AG04450 (cell line): ENCODE measurements at regions of chr10 and their contacts with region 1.

Region 1: GRCh38 chr10:96513698-96514561 is at the start of gene TLL2:
- DNase-seq: peak; percentile 66
- H3K4me3 ChIP-seq: peak within 1 kb of the TSS; percentile 61
- H3K27ac ChIP-seq: no peak within 1 kb of the TSS
- H3K27me3 ChIP-seq: peaks cover 18% of the 10 kb centered on the region
- CTCF ChIP-seq: peak; percentile 52
- polyA plus RNA-seq, gene TLL2: 0.01 TPM in 1 of 2 replicates, not detected in the other

Region 2: DNA sequence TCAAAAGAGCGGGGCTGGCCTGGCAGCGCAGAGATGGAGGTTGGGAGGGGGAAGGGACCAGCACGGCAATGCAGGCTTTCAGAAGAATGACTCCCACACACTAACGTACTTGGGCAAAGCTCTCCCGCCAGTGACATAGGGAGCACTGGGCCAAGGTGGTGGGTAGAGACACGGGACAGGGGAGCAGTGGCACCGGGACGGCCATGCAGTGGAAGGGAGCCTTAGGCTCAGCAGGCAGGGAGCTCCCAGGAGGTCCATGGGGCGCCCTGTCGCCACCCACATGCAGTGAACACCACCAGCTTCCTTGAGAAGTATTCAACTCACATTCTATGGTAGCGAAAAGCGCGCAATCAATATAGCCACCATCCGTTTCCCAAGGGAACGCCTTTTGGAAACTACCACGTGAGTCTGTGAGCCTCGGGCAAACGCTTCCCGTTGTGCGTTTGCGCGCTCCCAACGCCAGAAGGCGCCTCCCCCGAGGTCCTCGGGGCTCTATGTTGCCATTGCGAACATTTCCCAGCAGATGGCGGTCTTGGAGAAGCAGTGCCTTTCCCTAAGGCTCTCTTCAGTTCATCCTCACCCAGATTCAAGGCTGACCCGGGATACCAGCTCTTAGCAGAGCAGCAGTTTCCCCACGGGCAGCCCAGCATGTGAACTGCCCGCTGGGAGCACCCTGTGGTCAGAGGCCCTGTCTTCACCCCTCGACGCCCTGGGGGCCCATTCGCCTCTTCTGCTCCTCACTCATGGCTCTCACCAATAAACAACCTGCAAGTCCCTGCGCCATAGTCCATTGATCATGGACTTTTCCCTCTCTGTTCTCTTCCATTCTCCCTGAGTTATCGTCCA is 138.7 kb before region 1 on chr10:
- CTCF ChIA-PET with region 1: interaction called, 17 read pairs
- POLR2A ChIA-PET with region 1: no interaction called
- DNase-seq: peak; percentile 46
- H3K4me3 ChIP-seq: peak overlapping the region; percentile 53
- H3K27ac ChIP-seq: no peak overlapping the region
- H3K27me3 ChIP-seq: peaks cover 12% of the 10 kb centered on the region
- CTCF ChIP-seq: peak; percentile 95

Region 3: GRCh38 chr10:96395931-96396877 is 117.7 kb before region 1 on chr10:
- CTCF ChIA-PET with region 1: interaction called, 24 read pairs
- POLR2A ChIA-PET with region 1: no interaction called
- DNase-seq: peak; percentile 33
- H3K4me3 ChIP-seq: no peak overlapping the region
- H3K27ac ChIP-seq: no peak overlapping the region
- H3K27me3 ChIP-seq: peaks cover 13% of the 10 kb centered on the region
- CTCF ChIP-seq: peak; percentile 88

Region 4: GRCh38 chr10:96491299-96491698 is 22.6 kb before region 1 on chr10:
- CTCF ChIA-PET with region 1: interaction called, 18 read pairs
- POLR2A ChIA-PET with region 1: no interaction called
- DNase-seq: no peak
- H3K4me3 ChIP-seq: no peak overlapping the region
- H3K27ac ChIP-seq: no peak overlapping the region
- H3K27me3 ChIP-seq: no peaks in the 10 kb centered on the region
- CTCF ChIP-seq: 0 out of 2 replicates have a peak, but pooled peaks have one; percentile 15

Region 5: GRCh38 chr10:96524741-96525140 is 10.8 kb after region 1 on chr10:
- CTCF ChIA-PET with region 1: interaction called, 20 read pairs
- POLR2A ChIA-PET with region 1: interaction called, 3 read pairs
- DNase-seq: no peak
- H3K4me3 ChIP-seq: no peak overlapping the region
- H3K27ac ChIP-seq: no peak overlapping the region
- H3K27me3 ChIP-seq: no peaks in the 10 kb centered on the region
- CTCF ChIP-seq: no peak

Region 6: DNA sequence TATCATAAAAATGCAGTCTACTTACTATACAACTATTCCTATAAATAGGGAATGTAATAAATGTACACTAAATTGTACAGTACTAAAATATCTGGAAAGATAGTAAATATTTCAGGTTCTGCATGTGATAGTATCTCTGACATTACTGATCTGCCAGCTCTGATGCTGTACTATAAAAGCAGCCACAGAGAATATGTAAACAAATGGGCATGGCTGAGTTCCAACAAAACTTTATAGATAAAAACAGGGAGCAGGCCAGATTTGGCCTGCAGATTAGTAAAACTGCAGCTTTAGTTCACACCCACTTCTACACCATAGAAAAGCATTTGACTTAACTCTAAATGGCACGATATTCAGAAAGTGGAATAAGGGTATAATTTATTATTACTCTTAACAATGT is 18.6 kb after region 1 on chr10:
- CTCF ChIA-PET with region 1: interaction called, 13 read pairs
- POLR2A ChIA-PET with region 1: no interaction called
- DNase-seq: no peak
- H3K4me3 ChIP-seq: no peak overlapping the region
- H3K27ac ChIP-seq: no peak overlapping the region
- H3K27me3 ChIP-seq: no peaks in the 10 kb centered on the region
- CTCF ChIP-seq: no peak

Region 7: GRCh38 chr10:96548589-96548988 is 34.7 kb after region 1 on chr10:
- CTCF ChIA-PET with region 1: interaction called, 15 read pairs
- POLR2A ChIA-PET with region 1: no interaction called
- DNase-seq: no peak
- H3K4me3 ChIP-seq: no peak overlapping the region
- H3K27ac ChIP-seq: no peak overlapping the region
- H3K27me3 ChIP-seq: no peaks in the 10 kb centered on the region
- CTCF ChIP-seq: no peak